Left cardiac atrium (tissue), 4 donors: ENCODE measurements at regions of chr5 and their contacts with region 1.

Region 1: DNA sequence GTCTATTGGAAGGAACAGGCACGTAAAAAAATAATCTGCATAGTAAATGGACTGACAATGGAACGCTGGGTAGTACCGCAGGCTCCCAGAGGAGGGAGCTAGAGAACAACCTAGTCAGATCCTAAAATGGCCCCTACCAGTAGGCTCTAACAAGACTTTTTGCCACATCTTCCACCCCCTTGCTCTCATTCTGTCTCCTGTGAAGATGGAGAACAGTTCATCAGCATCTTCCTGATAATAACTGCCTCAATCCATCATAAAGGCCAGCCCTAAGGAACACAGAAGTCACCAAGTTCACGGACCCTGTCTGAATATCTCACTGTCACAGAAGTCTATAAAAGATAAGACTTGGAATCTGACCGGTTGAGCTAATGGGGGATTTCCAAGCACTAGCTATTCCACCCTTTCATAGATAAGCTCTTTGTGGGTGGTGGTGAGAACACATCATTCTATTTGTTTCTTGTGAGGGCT is 133.4 kb downstream of the SLC1A3 start:
- DNase-seq: peak; percentile 46
- ATAC-seq: peak; percentile 37 to 45

Region 2: GRCh38 chr5:36866174-36866573 is 126.4 kb after region 1 on chr5:
- intact Hi-C with region 1: loop called (anchors 5 to 10 kb)
- DNase-seq: no peak
- ATAC-seq: no peak

Region 3: GRCh38 chr5:37005946-37006540 is 266.3 kb after region 1 on chr5:
- intact Hi-C with region 1: loop called (anchors 5 to 10 kb)
- DNase-seq: no peak
- ATAC-seq: no peak

Region 4: DNA sequence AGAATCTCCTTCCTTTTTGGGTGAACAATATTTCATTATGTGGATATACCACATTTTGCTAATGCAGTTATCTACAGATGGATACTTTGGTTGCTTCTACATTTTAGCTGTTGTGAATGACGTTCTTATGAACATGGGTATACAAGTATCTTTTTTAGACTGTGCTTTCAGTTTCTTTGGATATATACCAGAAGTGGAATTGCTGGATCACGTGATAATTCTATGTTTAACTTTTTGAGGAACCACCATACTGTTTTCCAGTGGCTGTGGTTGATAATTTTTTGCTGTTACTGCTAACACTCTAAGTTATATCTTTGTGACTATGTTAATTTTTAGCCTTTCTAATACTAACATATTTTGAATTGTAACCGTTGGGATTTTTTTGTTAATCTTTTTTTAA is 651.8 kb after region 1 on chr5:
- intact Hi-C with region 1: no loop called
- DNase-seq: no peak
- ATAC-seq: no peak